GM10248 (cell line): ENCODE measurements at regions of chr5 and their contacts with region 1.

Region 1: GRCh38 chr5:139787568-139788293 is 7.9 kb upstream of the PSD2 start:
- DNase-seq: peak; percentile 94
- CTCF ChIP-seq: peak; percentile 95

Region 2: DNA sequence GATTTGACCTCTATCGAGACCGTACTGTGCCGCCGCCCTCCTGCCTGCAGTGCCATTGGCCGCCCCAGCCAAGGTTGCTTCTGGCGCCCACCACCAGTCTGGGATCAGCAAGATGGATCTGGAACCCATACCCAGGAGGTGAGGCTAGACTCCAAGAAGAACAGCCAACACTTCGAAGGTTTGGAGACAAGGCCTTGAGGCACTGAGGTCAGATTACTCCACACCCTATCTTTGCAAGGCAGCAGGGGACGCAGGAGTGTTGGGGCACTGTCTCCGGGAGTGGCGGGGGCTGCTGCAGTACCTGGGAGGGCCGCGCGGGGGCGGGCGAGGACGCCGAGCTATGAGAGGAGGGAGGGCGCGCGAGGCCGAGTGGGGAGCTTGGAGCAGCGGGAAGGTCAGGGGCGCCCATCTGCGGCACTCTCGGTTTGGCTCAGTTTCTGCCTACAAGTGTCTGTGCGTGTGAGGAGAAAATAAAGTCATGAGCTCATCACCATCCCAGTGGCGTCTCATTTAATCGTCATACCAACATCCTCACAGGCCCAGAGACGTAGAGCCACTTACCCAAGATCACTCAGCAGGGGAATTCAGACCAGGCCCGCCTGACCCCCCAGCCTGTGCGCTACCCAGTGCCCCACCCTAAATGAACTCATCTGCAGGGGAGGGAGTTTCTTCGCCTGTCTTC is 12.6 kb before region 1 on chr5:
- CTCF ChIA-PET with region 1: interaction called, 146 read pairs
- POLR2A ChIA-PET with region 1: no interaction called
- DNase-seq: peak; percentile 88
- CTCF ChIP-seq: peak; percentile 88

Region 3: DNA sequence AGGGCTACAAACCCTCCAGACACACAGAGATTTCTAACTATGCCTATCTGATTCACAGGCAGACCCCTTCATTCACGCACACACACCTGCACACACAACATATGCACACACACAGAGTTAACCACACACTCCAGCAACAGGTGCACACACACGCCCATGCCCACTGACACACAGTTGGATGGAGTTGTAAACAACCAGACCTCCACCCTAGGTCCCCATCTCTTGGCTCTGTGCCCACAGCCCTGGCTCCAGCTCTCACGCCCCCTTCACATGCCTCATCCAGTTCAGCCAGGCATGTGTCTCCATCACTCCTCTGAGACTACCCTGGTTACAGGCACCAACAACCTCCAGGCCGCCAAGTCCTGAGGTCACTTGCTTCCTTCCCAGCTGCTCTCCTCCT is 69.0 kb after region 1 on chr5:
- CTCF ChIA-PET with region 1: interaction called, 45 read pairs
- POLR2A ChIA-PET with region 1: no interaction called
- DNase-seq: no peak
- CTCF ChIP-seq: no peak

Region 4: DNA sequence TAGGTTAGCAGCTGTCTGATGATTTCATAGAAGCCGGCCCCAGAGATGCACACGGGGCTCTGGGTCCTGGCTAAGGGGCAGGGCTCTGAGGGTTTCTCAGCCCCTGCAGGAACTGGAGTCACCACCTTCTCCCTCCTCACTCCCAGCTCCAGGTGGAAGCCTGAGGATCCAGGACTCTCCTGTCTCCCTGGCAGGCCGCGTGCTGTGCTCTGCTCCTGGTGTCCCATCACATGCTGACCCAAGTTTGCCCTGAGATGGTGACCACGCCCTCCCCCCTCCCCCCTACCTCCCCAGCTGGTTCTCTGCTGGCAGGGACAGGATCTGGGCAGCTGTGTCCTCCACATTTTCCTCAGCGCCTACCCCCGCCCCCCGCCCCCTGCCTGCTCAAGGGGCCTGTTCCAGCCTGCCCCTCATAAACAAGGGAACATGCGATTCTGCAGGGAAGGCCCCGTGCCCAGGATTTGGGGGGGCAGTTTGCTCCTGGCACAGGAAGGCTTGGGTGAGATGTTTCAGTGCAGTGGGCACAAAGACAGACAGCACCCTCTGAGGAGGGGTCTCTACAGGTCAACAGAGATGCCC is 95.3 kb after region 1 on chr5:
- CTCF ChIA-PET with region 1: interaction called, 24 read pairs
- POLR2A ChIA-PET with region 1: no interaction called
- DNase-seq: no peak
- CTCF ChIP-seq: no peak

Region 5: DNA sequence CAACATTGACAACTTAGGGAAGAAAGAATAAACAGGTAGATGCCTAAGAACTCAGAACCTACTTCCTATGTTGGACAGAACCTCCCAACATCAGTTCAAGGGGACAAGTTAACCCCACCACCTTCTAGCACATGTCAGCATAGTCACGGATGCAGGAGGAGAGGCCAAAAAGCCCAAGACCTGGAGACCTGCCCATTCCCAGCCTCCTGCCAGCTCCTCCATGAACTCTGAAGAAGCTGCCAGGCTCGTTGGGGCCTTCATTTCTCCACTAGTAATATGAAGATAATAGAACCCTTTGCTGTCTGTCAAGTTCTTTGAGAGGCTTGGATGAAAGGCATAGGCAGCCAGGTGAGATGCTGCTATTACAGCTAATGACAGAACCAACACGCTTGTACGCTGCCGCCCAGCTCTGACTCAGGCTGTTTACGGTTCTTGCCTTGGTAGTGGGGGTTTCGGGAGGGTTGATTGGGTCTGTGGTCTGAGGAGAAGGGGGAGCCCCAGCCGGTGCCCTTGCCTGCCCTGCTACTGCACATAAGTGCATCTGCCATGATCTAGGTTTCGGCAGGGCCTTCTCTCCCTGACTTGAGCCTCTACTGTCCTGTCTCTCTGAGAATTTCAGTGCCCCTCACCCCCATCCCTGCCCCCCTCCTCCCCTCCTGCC is 173.1 kb after region 1 on chr5:
- CTCF ChIA-PET with region 1: interaction called, 439 read pairs
- POLR2A ChIA-PET with region 1: no interaction called
- DNase-seq: no peak
- CTCF ChIP-seq: no peak

Region 6: GRCh38 chr5:140145818-140146522 is 358.2 kb after region 1 on chr5:
- CTCF ChIA-PET with region 1: interaction called, 29 read pairs
- POLR2A ChIA-PET with region 1: no interaction called
- DNase-seq: peak; percentile 76
- CTCF ChIP-seq: peak; percentile 64